H1 (cell line): ENCODE measurements at regions of chr4 and their contacts with region 1.

Region 1: GRCh38 chr4:153466081-153466948 is at the start of gene TMEM131L:
- DNase-seq: peak in 1 of 2 experiments; percentile 82
- H3K4me3 ChIP-seq: peak within 1 kb of the TSS; percentile 81 to 91 (median 90)
- H3K27ac ChIP-seq: peak within 1 kb of the TSS; percentile 43; the same call in 1 of the 2 replicates
- H3K4me1 ChIP-seq: peaks cover 0 to 11% (median 5%) of the 10 kb centered on the region in 4 experiments; a peak in 6 of 7 replicates
- H3K27me3 ChIP-seq: 0 out of 7 replicates have a peak, but pooled peaks cover 0 to 3% (median 0%) of the 10 kb centered on the region in 4 experiments
- CTCF ChIP-seq: 0 out of 4 replicates have a peak, but pooled peaks of 1 of the 3 experiments have one; percentile 3
- EP300 ChIP-seq: no peak
- POLR2A ChIP-seq: peak; percentile 75 to 85; a peak in 2 of 3 replicates
- RAD21 ChIP-seq: peak in 1 of 2 experiments; percentile 1; a peak in 1 of 4 replicates
- total RNA-seq, gene TMEM131L: 25.3 and 26.1 TPM in 2 replicates

Region 2: GRCh38 chr4:153418558-153418957 is 47.8 kb before region 1 on chr4:
- CTCF ChIA-PET with region 1: interaction called, 3 read pairs
- POLR2A ChIA-PET with region 1: interaction called, 11 read pairs
- DNase-seq: peak; percentile 21 to 32
- H3K4me3 ChIP-seq: no peak overlapping the region
- H3K27ac ChIP-seq: no peak overlapping the region
- H3K4me1 ChIP-seq: peaks cover 0 to 3% (median 1%) of the 10 kb centered on the region in 4 experiments; a peak in 2 of 7 replicates
- H3K27me3 ChIP-seq: no peaks in the 10 kb centered on the region
- CTCF ChIP-seq: no peak
- EP300 ChIP-seq: no peak
- POLR2A ChIP-seq: no peak
- RAD21 ChIP-seq: no peak

Region 3: DNA sequence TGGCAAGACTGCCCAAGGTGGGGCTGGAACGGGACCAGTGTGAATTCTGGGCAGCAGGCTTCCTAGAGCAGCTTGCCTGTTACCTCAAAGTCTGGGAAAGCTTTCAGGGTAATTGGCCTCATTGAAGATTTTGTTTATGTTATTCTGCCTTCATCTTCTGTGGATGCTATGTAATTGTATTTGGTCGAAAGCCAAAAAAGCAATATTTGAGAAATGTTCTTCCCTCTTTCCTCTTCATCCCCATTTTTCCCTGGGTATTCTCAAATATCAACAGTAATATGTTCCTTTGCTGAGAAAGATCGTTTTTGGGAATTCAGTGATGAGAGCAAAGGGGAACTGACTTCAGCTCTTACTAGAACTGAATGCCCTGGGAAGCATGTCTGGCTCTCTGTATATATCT is 12.8 kb after region 1 on chr4:
- CTCF ChIA-PET with region 1: interaction called, 4 read pairs
- POLR2A ChIA-PET with region 1: interaction called, 14 read pairs
- DNase-seq: no peak
- H3K4me3 ChIP-seq: no peak overlapping the region
- H3K27ac ChIP-seq: no peak overlapping the region
- H3K4me1 ChIP-seq: peaks cover 0 to 3% (median 0%) of the 10 kb centered on the region in 4 experiments; a peak in 2 of 7 replicates
- H3K27me3 ChIP-seq: no peaks in the 10 kb centered on the region
- CTCF ChIP-seq: no peak
- EP300 ChIP-seq: no peak
- POLR2A ChIP-seq: no peak
- RAD21 ChIP-seq: no peak

Region 4: DNA sequence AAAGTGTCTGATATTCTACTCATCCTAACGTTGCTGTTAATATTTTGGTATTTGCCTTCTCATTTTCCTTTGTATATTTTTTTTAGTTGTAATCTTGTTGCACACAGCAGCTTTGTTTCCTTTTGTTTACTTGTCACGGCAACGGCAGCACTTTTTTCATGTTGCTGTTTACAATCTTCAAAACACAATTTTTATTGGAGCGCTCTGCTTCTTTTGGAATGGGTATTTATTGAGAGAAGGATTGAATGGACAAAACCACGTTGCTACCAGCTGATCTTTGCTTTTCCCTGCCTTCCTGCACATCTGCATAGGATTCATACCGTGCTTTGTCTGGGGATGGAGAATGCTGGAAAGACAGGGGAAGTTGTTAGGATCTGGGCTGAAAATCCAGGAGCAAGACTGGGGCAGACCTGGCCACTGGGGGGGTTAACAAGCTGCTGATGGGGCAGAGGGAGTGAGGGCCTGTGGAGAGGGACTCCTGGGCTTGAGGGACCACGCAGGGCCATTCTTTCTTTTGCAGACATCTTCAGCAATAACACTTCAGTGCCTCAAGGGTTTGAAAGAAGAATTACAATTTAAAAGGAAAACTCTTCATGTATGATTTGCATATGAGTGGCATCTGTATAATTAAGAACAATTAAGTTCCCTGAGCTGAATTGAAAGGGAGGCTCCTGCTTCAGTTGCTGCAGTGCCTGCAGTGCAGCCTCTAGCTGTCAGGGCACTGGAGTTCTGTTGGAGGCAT is 69.6 kb after region 1 on chr4:
- CTCF ChIA-PET with region 1: interaction called, 5 read pairs
- POLR2A ChIA-PET with region 1: interaction called, 21 read pairs
- DNase-seq: peak; percentile 56 to 61
- H3K4me3 ChIP-seq: 0 out of 8 replicates have a peak overlapping the region, but pooled peaks of 1 of the 4 experiments have one; percentile 0
- H3K27ac ChIP-seq: peak overlapping the region; percentile 57
- H3K4me1 ChIP-seq: peaks cover 13 to 27% (median 22%) of the 10 kb centered on the region in 4 experiments
- H3K27me3 ChIP-seq: no peaks in the 10 kb centered on the region
- CTCF ChIP-seq: peak in 1 of 3 experiments; percentile 8; a peak in 1 of 4 replicates
- EP300 ChIP-seq: no peak
- POLR2A ChIP-seq: no peak
- RAD21 ChIP-seq: peak; percentile 13 to 23